RWPE1 (cell line): ENCODE measurements at regions of chr1 and their contacts with region 1.

Region 1: GRCh38 chr1:12124693-12125421 is 41.9 kb upstream of the TNFRSF1B start:
- DNase-seq: peak; percentile 42
- H3K27ac ChIP-seq: no peak overlapping the region
- CTCF ChIP-seq: peak; percentile 94

Region 2: GRCh38 chr1:11641776-11642305 is 483.0 kb before region 1 on chr1:
- CTCF ChIA-PET with region 1: no interaction called
- POLR2A ChIA-PET with region 1: no interaction called
- DNase-seq: no peak
- H3K27ac ChIP-seq: no peak overlapping the region
- CTCF ChIP-seq: no peak

Region 3: DNA sequence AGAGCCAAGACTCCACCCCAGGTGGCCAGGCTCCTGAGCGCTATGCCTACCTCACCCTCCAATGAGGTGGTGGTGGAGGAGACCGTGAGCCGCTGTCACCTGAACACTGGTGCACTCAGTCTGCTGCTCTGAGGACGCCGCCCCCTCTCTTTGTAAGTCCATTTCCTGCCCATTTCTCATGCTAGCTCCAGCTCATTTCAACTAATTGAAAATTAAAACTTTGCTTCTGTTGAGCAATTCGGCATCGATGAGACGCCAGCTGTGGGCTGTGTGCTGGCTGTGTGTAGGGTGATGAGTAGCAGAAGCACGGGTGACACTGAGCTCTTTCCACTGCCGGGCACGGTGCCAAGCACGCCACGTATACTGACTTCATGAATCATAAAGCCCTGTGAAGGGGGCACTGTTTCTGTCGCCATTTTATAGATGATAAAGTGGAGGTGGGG is 53.2 kb after region 1 on chr1:
- CTCF ChIA-PET with region 1: interaction called, 14 read pairs
- POLR2A ChIA-PET with region 1: no interaction called
- DNase-seq: no peak
- H3K27ac ChIP-seq: no peak overlapping the region
- CTCF ChIP-seq: no peak

Region 4: DNA sequence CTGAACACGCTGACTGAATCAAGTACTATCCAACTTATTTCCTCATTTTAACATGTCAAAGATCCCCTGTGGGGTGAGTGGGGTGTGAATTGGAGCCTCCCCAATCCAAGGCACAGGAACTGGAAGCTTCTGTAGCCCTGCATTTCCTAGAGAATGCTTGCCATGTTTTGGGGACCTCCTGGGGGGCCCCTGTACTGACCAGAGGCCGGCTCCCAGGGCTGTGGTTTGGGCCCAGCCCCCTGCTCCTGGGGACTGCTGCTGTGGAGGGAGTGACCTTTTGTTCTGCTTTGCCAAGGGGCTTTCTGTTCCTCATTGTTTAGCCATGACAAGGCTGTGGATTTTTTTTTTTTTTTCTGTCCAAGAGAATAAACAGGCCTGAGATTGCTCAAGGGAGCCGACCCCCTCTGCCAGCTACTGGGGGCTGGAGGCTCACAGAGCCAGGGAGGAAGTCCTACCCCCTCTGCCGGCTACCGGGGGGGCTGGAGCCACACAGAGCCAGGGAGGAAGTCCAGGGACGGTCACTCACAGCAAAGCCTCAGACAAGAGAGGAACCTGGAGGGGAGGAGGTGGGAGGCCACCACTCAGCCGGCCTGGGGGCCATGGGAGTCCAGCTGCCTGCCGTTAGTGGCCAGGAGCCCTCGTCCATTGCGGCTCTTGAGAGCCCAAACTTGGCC is 59.3 kb after region 1 on chr1:
- CTCF ChIA-PET with region 1: interaction called, 14 read pairs
- POLR2A ChIA-PET with region 1: no interaction called
- DNase-seq: no peak
- H3K27ac ChIP-seq: no peak overlapping the region
- CTCF ChIP-seq: no peak

Region 5: GRCh38 chr1:12196641-12197482 is 72.0 kb after region 1 on chr1:
- CTCF ChIA-PET with region 1: interaction called, 16 read pairs
- POLR2A ChIA-PET with region 1: no interaction called
- DNase-seq: no peak
- H3K27ac ChIP-seq: no peak overlapping the region
- CTCF ChIP-seq: no peak

Region 6: DNA sequence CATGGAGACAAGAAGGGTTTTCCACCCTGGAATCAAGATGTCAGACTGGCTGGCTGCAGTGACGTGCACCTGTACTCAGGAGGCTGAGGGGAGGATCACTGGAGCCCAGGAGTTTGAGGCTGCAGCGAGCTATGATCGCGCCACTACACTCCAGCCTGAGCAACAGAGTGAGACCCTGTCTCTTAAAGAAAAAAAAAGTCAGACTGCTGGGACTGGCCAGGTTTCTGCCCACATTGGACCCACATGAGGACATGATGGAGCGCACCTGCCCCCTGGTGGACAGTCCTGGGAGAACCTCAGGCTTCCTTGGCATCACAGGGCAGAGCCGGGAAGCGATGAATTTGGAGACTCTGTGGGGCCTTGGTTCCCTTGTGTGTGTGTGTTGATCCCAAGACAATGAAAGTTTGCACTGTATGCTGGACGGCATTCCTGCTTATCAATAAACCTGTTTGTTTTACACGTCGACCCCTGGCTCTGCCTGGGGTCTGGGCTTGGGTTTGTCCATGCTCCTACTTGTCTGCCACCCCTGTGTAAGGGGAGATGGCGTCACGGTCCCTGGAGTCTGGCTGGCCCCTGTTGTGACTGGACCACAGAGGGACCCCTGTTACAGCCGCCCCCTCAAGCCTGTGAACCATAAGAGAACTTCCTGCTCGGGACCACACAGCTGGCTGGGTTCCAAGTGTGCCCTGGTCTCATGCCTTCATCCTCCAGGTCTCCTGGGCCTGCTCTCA is 84.1 kb after region 1 on chr1:
- CTCF ChIA-PET with region 1: interaction called, 63 read pairs
- POLR2A ChIA-PET with region 1: no interaction called
- DNase-seq: peak; percentile 82
- H3K27ac ChIP-seq: no peak overlapping the region
- CTCF ChIP-seq: peak; percentile 86

Region 7: GRCh38 chr1:12215118-12215961 is 90.5 kb after region 1 on chr1:
- CTCF ChIA-PET with region 1: interaction called, 63 read pairs
- POLR2A ChIA-PET with region 1: no interaction called
- DNase-seq: no peak
- H3K27ac ChIP-seq: no peak overlapping the region
- CTCF ChIP-seq: no peak

Region 8: DNA sequence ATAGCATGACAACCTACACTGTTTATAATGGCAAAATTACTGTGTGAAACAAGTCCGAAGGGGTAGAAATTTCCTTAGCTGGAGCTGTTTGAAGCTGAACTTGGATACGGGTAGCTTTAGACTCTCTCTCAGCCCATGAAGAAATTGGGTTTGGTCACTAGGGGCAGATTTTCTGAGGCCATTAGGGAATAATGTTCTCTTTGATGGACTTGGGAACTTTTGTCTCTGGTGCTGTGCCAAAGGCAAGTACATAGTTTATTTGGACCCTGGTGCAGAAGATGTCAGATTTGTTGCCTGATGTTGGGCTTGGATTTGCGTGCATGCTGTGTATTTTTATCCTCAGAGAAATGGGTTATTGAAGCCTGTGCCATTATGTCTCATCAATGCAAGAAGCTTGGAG is 214.5 kb after region 1 on chr1:
- CTCF ChIA-PET with region 1: no interaction called
- POLR2A ChIA-PET with region 1: no interaction called
- DNase-seq: no peak
- H3K27ac ChIP-seq: no peak overlapping the region
- CTCF ChIP-seq: no peak